Ovary (tissue), 10 donors: ENCODE measurements at regions of chr20 and their contacts with region 1.

Region 1: DNA sequence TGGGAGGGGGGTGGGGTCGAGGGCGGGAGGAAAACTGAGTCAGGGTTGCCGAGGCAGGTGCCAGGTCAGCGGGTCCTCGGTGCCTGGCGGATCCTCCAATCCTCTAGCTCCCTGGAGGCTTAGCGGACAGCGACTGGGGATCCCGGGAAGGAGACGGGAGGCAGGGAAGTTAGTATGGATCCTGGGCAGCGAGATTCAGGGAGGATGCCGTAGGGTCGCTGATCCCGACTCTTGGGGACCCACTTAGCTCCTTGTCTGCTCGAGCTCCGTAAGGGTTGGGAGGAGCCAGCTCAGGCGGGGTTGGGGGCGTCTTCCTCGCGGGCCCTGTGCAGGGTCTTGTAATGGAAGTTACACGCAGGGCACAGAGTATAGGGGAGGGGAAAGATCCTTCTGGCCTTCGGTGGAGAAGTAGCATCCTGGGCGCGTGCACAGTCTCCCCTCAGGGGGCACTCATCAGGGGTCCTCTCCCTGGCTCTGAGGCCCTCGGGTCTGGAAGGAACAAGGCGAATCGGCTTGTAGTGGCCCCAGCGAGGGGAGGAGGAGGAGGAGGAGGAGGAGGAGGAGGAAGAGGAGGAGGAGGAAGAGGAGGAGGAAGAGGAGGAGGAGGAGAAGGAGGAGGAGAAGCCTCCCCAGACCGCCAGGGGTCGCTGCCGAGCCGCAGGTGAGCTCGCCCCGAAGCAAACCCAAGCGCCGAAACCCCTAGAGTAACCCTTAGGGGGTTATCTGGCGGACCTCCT is 6.4 kb upstream of the SLC12A5 start:
- DNase-seq: peak; percentile 30 to 69 (median 51)
- H3K4me3 ChIP-seq: no peak overlapping the region
- H3K27ac ChIP-seq: no peak overlapping the region
- H3K4me1 ChIP-seq: peaks cover 2% of the 10 kb centered on the region
- H3K27me3 ChIP-seq: peaks cover 7% of the 10 kb centered on the region
- CTCF ChIP-seq: peak in 2 of 3 donors; percentile 35 to 46
- EP300 ChIP-seq: no peak
- POLR2A ChIP-seq: no peak

Region 2: DNA sequence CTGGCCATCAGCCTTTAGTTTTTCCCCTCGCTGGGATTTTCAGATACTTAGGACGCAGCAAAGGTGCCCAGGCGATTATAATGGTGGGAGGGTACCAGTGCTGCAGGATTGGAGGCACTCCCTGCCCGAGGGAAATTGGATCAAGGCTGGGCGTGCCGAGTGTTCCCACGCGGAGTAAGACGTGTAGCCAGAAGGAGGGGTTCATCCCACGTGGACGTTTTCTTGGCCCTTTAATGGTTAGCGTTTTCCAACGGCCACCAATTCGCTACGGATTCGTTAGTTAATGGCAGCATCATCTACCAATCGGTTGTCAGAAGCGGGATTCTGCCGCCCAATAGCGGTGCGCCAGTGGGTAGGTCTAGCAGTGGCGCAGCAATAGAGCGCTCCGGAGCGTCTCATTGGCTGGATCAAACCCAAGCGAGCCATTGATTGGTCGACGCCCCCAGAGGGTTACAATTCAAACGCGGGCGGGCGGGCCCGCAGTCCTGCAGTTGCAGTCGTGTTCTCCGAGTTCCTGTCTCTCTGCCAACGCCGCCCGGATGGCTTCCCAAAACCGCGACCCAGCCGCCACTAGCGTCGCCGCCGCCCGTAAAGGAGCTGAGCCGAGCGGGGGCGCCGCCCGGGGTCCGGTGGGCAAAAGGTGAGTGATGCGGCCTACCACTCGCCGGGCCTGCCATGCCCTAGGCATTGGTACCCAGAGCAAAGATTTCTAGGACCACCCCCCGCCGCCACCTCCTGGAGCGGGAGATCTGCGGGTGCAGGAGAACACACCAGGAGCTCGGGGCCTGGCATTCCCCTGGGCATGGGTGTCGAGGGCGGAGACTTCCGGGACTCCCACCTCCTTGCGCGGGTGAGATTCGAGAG is 210.2 kb before region 1 on chr20 and contains the start of gene UBE2C:
- intact Hi-C with region 1: no loop called
- DNase-seq: peak; percentile 95 to 98 (median 97)
- H3K4me3 ChIP-seq: peak within 1 kb of the TSS; percentile 47
- H3K27ac ChIP-seq: peak within 1 kb of the TSS in 1 of 2 donors; percentile 39
- H3K4me1 ChIP-seq: peaks cover 2% of the 10 kb centered on the region
- H3K27me3 ChIP-seq: no peaks in the 10 kb centered on the region
- CTCF ChIP-seq: no peak
- EP300 ChIP-seq: no peak
- POLR2A ChIP-seq: no peak
- total RNA-seq, gene UBE2C: 0.69 to 1.9 (median 1.0) TPM in 4 of 7 donors, not detected in the others

Region 3: DNA sequence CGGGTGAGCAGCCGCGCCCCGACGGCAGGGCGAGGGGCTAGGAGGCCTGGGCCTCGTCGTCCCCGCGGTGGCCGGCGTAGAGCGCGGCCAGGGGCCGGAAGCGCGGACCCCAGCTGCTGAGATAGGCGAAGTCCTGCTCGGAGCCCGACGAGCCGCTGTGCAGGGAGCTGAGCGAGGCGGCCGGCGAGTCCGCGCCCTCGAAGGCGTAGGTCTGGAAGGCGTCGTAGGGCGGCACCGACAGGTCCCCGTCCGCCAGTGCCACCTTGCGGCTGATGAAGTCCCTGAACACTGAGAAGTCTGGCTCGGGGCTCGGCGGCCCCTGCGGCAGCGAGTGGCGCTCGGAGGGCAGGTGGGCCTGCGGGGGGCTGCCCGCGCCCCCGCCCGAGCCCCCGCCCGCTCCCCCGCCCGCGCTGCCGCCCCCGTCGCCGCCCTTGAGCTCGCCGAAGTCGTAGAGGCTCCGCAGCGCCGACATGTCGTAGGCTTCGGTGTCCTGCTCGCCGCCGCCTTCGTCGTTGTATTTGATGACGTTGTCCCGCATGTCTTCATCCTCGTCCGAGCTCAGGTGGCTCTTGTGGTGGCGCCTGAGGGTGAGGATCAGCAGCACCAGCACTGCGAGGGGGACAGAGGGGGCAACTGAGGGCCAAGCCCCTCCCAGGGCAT is 152.0 kb after region 1 on chr20:
- intact Hi-C with region 1: loop called in 1 of 4 experiments (anchors 10 kb)
- DNase-seq: peak; percentile 52 to 82 (median 61)
- H3K4me3 ChIP-seq: no peak overlapping the region
- H3K27ac ChIP-seq: no peak overlapping the region
- H3K4me1 ChIP-seq: peaks cover 2% of the 10 kb centered on the region
- H3K27me3 ChIP-seq: no peaks in the 10 kb centered on the region
- CTCF ChIP-seq: peak in 1 of 3 donors; percentile 27
- EP300 ChIP-seq: no peak
- POLR2A ChIP-seq: no peak